ENCODE measurements at regions of chr6 and their contacts with region 1.

Region 1: DNA sequence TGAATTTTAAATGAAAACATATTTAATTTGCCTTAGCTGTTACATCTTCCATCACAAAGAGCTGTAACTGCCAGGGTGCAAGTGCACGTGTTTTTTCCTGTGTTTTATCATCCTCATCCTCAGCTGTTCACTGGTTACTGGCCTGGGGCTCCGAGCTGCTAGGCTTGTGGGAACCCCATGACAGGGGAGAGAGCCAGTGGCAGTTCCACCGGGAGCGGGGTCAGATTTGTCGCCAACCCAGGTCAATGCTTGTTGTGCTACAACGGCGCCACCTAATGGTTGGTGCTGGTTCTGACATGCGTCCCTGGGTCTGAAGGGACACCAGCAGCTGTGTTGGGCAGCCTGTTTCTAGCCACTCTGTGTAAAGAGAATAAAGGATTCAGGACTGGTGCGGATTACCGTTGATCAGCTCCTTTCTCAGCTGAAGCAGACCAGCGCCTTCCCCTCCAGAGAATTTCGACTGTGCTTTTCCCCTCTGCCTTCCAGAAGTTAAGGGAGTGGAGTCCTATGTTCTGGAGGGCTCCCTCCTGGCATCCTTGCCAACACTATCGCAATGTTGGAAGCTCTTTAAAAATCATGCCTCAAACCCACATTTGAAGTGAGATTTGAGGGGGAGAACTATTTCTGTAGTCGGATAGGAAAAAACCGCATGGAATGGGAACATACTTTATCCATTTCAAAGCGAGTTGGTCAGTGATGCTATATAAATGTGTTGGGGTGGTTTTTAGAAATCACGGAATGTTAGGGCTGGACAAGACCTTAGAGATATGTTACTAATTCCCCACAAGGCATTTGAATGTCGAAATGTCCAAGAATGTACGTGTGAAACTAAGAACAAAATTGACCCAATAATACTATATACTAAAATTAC is 32.1 kb downstream of the SUMO4 start:
- DNase-seq: peak; percentile 91
- H3K4me3 Mint-ChIP-seq: peak overlapping the region; percentile 55
- H3K27ac Mint-ChIP-seq: peak overlapping the region; percentile 66
- H3K4me1 Mint-ChIP-seq: peaks cover 9% of the 10 kb centered on the region
- H3K27me3 Mint-ChIP-seq: no peaks in the 10 kb centered on the region

Region 2: GRCh38 chr6:149065658-149066556 is 366.2 kb before region 1 on chr6:
- CTCF ChIA-PET with region 1: interaction called, 16 read pairs
- POLR2A ChIA-PET with region 1: interaction called, 4 read pairs
- DNase-seq: peak; percentile 38
- H3K4me3 Mint-ChIP-seq: peak overlapping the region; percentile 12
- H3K27ac Mint-ChIP-seq: peak overlapping the region; percentile 89
- H3K4me1 Mint-ChIP-seq: peaks cover 53% of the 10 kb centered on the region
- H3K27me3 Mint-ChIP-seq: no peaks in the 10 kb centered on the region

Region 3: DNA sequence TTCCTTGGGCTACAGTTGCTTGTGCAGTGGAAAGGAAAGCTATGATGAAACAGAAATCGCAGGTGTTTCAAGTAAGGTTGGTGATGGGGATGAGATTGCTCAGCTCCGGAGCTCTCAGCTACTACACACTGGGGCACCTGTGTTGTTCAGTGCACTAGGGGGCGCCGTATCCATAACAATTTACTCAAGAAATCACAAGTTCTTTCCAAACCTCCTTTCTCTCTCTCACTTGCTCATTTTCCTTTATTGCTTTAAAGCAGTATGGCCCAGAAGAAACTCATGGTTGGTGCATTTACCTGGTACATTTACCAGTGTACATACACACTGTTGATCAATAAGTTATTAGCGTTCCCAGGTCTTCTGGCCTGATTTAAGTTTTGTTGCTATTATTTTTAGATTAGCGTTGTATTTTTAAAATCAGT is 349.8 kb before region 1 on chr6:
- CTCF ChIA-PET with region 1: interaction called, 35 read pairs
- POLR2A ChIA-PET with region 1: interaction called, 8 read pairs
- DNase-seq: peak; percentile 91
- H3K4me3 Mint-ChIP-seq: peak overlapping the region; percentile 50
- H3K27ac Mint-ChIP-seq: peak overlapping the region; percentile 96
- H3K4me1 Mint-ChIP-seq: peaks cover 87% of the 10 kb centered on the region
- H3K27me3 Mint-ChIP-seq: no peaks in the 10 kb centered on the region

Region 4: GRCh38 chr6:149454386-149454848 is 22.3 kb after region 1 on chr6:
- CTCF ChIA-PET with region 1: interaction called, 11 read pairs
- POLR2A ChIA-PET with region 1: no interaction called
- DNase-seq: no peak
- H3K4me3 Mint-ChIP-seq: no peak overlapping the region
- H3K27ac Mint-ChIP-seq: no peak overlapping the region
- H3K4me1 Mint-ChIP-seq: peaks cover 7% of the 10 kb centered on the region
- H3K27me3 Mint-ChIP-seq: no peaks in the 10 kb centered on the region

Region 5: GRCh38 chr6:149513915-149514314 is 81.8 kb after region 1 on chr6:
- CTCF ChIA-PET with region 1: interaction called, 44 read pairs
- POLR2A ChIA-PET with region 1: interaction called, 4 read pairs
- DNase-seq: no peak
- H3K4me3 Mint-ChIP-seq: no peak overlapping the region
- H3K27ac Mint-ChIP-seq: no peak overlapping the region
- H3K4me1 Mint-ChIP-seq: peaks cover 41% of the 10 kb centered on the region
- H3K27me3 Mint-ChIP-seq: no peaks in the 10 kb centered on the region

Measured in activated CD4-positive, alpha-beta memory T cell treated with anti-CD3 and anti-CD28 coated beads, Interleukin-2, amount 10 ng/mL, durations not matched to agents 7 days and 5 days (primary cell).